Calu3 (cell line): ENCODE measurements at regions of chr5 and their contacts with region 1.

Region 1: DNA sequence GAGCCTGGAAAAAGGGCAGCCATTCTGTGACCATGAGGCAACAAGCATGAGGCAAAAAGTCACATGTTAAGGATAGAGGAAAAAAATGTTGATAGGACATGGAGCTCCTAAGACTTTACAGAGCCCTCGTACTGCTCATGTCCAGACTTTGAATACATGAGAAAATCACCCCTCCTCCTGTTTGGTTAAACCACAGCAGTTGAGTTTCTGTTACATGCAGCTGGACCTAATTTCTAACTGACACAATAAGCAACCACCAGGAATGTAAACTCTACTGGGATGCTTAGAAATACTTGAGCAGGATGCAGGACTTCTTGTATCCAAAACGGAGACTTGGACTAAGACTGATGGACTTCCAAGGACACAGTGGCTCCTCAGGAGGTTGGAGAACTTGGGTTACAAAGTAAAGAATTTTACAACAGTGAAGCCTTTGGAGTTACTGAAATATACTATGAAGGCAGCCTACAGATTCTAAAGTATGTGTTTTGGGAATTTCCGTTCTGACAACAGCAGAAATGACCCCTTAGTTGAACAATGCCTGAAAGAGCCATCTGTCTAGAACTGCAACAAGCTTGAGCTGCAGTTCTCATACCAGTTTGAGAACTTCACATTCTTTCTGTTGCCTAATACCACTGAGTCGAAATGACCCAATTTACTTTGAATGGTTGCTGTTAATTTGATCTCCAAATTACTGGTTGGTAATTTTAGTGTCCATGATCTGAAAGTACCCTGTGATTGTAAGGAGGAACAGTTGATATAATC is 268.9 kb downstream of the PIK3R1 start:
- DNase-seq: no peak
- H3K4me3 Mint-ChIP-seq: no peak overlapping the region
- H3K27ac Mint-ChIP-seq: no peak overlapping the region
- H3K4me1 Mint-ChIP-seq: no peaks in the 10 kb centered on the region
- H3K27me3 Mint-ChIP-seq: no peaks in the 10 kb centered on the region
- CTCF ChIP-seq: no peak

Region 2: GRCh38 chr5:68067291-68067690 is 417.2 kb before region 1 on chr5:
- CTCF ChIA-PET with region 1: no interaction called
- intact Hi-C with region 1: no loop called
- DNase-seq: no peak
- H3K4me3 Mint-ChIP-seq: no peak overlapping the region
- H3K27ac Mint-ChIP-seq: no peak overlapping the region
- H3K4me1 Mint-ChIP-seq: peaks cover 27% of the 10 kb centered on the region
- H3K27me3 Mint-ChIP-seq: no peaks in the 10 kb centered on the region
- CTCF ChIP-seq: no peak

Region 3: GRCh38 chr5:68953875-68954617 is 469.6 kb after region 1 on chr5:
- CTCF ChIA-PET with region 1: no interaction called
- intact Hi-C with region 1: loop called (anchors 10 kb)
- DNase-seq: no peak
- H3K4me3 Mint-ChIP-seq: no peak overlapping the region
- H3K27ac Mint-ChIP-seq: no peak overlapping the region
- H3K4me1 Mint-ChIP-seq: no peaks in the 10 kb centered on the region
- H3K27me3 Mint-ChIP-seq: peaks cover 15% of the 10 kb centered on the region
- CTCF ChIP-seq: no peak